ENCODE measurements at regions of chr15 and their contacts with region 1.

Region 1: GRCh38 chr15:51782357-51782896 is 31.0 kb downstream of the TMOD2 start:
- DNase-seq: peak; percentile 12
- H3K4me3 Mint-ChIP-seq: no peak overlapping the region
- H3K27ac Mint-ChIP-seq: no peak overlapping the region
- H3K4me1 Mint-ChIP-seq: no peaks in the 10 kb centered on the region
- H3K27me3 Mint-ChIP-seq: no peaks in the 10 kb centered on the region
- CTCF ChIP-seq: no peak

Region 2: GRCh38 chr15:51971375-51972133 is 189.1 kb after region 1 on chr15 and contains the start of gene LEO1:
- CTCF ChIA-PET with region 1: no interaction called
- intact Hi-C with region 1: loop called (anchors 5 kb)
- DNase-seq: peak; percentile 84
- H3K4me3 Mint-ChIP-seq: peak within 1 kb of the TSS; percentile 98
- H3K27ac Mint-ChIP-seq: peak within 1 kb of the TSS; percentile 97
- H3K4me1 Mint-ChIP-seq: no peaks in the 10 kb centered on the region
- H3K27me3 Mint-ChIP-seq: no peaks in the 10 kb centered on the region
- CTCF ChIP-seq: no peak
- total RNA-seq, gene LEO1: 21.3 and 22.5 TPM in 2 replicates

Region 3: DNA sequence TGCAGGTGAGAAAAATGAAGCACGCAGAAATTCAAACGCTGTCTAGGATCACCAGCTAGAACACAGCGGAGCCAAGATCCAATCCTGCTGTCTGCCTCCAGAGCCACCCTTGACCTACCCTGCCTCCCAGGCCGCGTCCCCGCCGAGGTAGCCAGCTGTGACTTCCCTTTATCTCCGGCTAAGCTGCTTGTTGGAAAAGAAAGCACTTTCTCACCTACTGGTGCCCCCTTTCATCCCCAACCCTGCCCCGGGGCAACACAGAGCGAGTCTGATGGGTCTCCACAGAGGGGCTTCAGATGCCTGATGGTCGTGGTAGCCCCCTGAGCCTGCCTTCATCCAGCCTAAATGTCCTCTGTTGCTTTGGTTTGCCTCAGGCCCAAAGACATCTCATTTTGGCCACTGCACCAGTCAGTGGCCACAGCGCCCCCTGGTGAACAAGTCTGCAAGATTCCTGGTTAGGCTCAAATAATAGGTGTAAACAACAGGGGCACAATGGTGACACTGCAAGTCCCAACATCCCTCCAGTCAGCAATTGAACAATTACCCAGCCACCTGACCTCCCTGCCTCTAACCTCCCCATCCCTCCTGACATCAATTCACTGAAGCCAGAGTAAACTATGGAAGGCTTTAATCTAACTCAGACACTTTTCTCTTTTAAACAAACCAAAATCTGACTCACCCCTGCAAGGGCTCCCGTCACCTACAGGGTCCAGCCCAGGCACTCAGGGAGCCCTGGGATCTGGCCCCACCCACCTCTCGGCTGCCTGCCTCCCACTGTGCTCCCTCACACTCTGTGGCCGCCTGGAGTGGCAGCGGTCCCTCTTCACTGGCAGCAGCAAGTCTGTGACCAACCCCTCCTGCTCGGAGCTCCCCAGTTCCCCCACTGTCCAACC is 357.4 kb after region 1 on chr15:
- CTCF ChIA-PET with region 1: no interaction called
- intact Hi-C with region 1: loop called (anchors 2 kb)
- DNase-seq: peak; percentile 76
- H3K4me3 Mint-ChIP-seq: no peak overlapping the region
- H3K27ac Mint-ChIP-seq: no peak overlapping the region
- H3K4me1 Mint-ChIP-seq: peaks cover 16% of the 10 kb centered on the region
- H3K27me3 Mint-ChIP-seq: no peaks in the 10 kb centered on the region
- CTCF ChIP-seq: peak; percentile 75

Region 4: DNA sequence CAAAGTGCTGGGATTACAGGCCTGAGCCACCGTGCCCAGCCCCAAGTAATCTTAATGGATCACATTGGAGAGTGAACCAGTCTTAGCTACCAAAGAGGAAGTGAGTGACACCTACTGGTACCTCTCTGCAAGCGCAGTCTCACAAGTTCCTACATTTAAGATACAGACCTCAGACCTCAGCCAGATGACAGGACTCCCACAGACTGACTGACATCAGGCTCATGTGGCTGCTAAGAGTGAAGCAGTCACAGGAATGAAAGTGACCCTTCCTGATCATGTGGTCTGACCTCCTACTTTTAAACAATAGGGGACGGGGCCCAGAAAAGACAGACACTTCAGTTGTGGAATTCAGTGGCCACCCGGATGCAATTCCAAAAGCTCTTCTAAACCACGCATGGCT is 445.0 kb after region 1 on chr15:
- CTCF ChIA-PET with region 1: no interaction called
- intact Hi-C with region 1: loop called (anchors 10 kb)
- DNase-seq: peak; percentile 51
- H3K4me3 Mint-ChIP-seq: no peak overlapping the region
- H3K27ac Mint-ChIP-seq: no peak overlapping the region
- H3K4me1 Mint-ChIP-seq: no peaks in the 10 kb centered on the region
- H3K27me3 Mint-ChIP-seq: no peaks in the 10 kb centered on the region
- CTCF ChIP-seq: peak; percentile 52

Region 5: DNA sequence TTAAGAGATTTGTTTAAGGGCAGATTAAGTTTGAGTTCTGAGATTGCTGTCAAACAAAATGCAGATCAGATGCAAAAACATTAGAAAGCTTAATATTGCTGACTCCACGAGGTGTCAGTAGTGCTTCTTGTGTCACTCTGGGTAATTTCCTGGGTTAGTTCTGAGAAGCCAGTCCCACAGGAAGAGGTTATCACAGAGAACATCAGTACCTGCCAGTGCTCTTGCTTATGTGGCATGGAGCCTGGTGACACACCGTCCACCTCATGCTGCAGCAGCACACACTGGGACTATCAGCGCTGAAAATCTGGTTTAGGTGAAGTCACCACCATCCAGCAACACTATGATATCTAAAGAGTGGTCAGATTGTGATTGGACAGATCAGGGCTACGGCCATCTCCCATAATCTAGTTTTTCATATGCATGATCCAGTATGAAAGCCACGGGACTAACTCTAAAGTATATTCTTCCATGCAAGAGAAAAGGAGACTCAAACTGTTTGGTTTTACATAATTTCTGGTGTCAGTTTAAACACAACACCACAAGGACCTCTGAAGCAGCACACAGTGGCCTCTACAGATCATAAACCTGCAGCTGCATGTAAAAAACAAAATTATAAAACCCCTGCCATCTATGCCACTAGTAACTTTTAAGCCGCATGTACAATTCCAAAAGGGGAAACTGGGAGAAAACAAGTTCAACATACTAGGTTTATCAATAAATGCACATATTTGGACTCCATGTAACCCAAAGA is 549.2 kb after region 1 on chr15:
- CTCF ChIA-PET with region 1: no interaction called
- intact Hi-C with region 1: no loop called
- DNase-seq: peak; percentile 38
- H3K4me3 Mint-ChIP-seq: no peak overlapping the region
- H3K27ac Mint-ChIP-seq: no peak overlapping the region
- H3K4me1 Mint-ChIP-seq: peaks cover 20% of the 10 kb centered on the region
- H3K27me3 Mint-ChIP-seq: no peaks in the 10 kb centered on the region
- CTCF ChIP-seq: no peak

Measured in Calu3 (cell line).